T-cell (primary cell): ENCODE measurements at regions of chr17 and their contacts with region 1.

Region 1: DNA sequence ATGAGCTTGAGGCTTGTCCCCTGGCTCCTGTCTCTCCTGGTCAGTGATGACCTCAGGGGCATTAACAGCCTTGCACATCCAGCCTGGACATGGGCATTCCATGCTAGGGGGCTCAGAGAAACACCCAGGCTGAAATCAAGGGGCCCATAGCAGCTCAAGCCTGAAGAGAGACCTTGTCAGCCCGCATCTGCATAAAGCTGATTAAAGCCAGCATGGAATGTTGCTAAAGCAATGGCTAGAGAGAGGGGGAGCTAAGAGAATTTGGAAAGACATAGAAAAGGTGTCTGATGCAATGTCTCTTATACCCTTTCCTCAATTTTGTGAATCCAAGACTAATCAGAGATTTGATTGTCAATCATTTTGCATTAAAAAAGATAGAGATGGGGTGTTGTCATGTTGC is 51.4 kb upstream of the WSCD1 start:
- DNase-seq: no peak
- ATAC-seq: no peak
- H3K4me3 ChIP-seq: no peak overlapping the region
- H3K4me3 Mint-ChIP-seq: no peak overlapping the region
- H3K27ac ChIP-seq: no peak overlapping the region
- H3K27ac Mint-ChIP-seq: no peak overlapping the region
- H3K4me1 ChIP-seq: no peaks in the 10 kb centered on the region
- H3K4me1 Mint-ChIP-seq: no peaks in the 10 kb centered on the region
- H3K27me3 ChIP-seq: peaks cover 3 to 9% of the 10 kb centered on the region in 2 experiments
- H3K27me3 Mint-ChIP-seq: peaks cover 16 to 18% of the 10 kb centered on the region in 2 donors

Region 2: DNA sequence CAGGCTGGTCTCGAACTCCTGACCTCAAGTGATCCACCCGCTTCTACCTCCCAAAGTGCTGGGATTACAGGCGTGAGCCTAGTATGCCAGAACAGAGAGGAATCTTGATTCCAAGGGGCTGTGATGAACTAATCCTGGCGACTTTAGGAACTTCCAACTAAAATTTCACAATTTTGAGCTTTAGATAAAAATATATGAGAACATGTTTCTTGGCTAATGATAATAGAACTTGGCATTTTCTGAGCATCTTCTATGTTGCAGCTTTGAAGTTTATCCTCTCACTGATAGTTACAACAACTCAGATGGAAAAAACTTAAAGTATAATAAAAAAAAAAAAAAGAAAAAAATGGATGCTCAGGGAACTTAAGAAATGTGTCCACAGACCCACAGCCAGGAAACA is 18.4 kb before region 1 on chr17:
- CTCF ChIA-PET with region 1: interaction called in 1 of 2 experiments, 5 read pairs
- POLR2A ChIA-PET with region 1: interaction called in 1 of 2 experiments, 12 read pairs
- DNase-seq: no peak
- ATAC-seq: no peak
- H3K4me3 ChIP-seq: no peak overlapping the region
- H3K4me3 Mint-ChIP-seq: no peak overlapping the region
- H3K27ac ChIP-seq: no peak overlapping the region
- H3K27ac Mint-ChIP-seq: no peak overlapping the region
- H3K4me1 ChIP-seq: no peaks in the 10 kb centered on the region
- H3K4me1 Mint-ChIP-seq: no peaks in the 10 kb centered on the region
- H3K27me3 ChIP-seq: peaks cover 0 to 12% of the 10 kb centered on the region in 2 experiments
- H3K27me3 Mint-ChIP-seq: peaks cover 32 to 36% of the 10 kb centered on the region in 2 donors